Right cardiac atrium (tissue), 5 donors: ENCODE measurements at regions of chr2 and their contacts with region 1.

Region 1: DNA sequence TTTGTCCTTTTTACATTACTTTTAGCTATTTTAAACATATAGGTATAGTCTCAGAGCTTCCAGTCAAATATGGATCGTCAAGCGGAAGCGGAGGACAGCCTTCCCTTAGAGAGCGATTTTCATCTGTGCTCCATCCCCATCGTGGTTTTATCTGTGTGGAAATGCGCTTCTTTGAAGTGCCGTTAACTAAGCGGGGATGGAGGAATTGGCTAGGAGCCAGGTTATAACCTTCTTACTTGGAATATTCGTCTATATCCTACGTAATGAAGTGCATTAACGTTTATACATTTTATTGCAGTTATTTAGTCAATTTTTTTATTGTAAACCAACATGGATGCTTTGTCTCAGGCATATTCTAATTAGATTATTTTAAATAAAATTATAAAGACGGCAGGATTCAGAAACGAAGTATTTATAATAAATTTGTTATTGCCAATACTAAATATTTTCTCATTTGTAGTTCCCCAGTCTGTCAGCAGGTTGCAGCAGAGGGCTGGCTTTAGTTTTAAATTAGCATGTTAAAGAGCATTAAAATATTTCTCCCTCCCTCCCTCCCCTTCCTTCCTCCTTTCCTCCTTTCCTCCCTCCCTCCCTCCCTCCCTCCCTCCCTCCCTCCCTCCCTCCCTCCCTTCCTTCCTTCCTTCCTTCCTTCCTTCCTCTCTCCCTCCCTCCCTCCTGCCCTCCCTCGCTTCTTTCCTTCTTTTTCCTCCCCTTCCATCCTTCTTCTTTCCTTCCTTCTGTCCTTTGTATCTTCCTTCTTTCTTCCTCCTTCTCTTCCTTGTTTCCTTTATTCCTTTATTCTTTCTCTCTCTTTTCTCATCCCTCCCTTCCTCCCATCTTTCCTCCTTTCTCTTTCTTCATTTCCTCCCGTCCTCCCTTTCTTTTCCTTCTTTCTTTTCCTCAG is 80.6 kb upstream of the DOCK10 start:
- DNase-seq: no peak
- ATAC-seq: no peak
- H3K4me3 ChIP-seq: no peak overlapping the region
- H3K27ac ChIP-seq: no peak overlapping the region
- H3K4me1 ChIP-seq: no peaks in the 10 kb centered on the region
- H3K27me3 ChIP-seq: no peaks in the 10 kb centered on the region

Region 2: GRCh38 chr2:223860809-223861738 is 1261.8 kb before region 1 on chr2:
- intact Hi-C with region 1: no loop called
- DNase-seq: no peak
- ATAC-seq: peak in 1 of 2 donors; percentile 54
- H3K4me3 ChIP-seq: no peak overlapping the region
- H3K27ac ChIP-seq: no peak overlapping the region
- H3K4me1 ChIP-seq: no peaks in the 10 kb centered on the region
- H3K27me3 ChIP-seq: no peaks in the 10 kb centered on the region

Region 3: DNA sequence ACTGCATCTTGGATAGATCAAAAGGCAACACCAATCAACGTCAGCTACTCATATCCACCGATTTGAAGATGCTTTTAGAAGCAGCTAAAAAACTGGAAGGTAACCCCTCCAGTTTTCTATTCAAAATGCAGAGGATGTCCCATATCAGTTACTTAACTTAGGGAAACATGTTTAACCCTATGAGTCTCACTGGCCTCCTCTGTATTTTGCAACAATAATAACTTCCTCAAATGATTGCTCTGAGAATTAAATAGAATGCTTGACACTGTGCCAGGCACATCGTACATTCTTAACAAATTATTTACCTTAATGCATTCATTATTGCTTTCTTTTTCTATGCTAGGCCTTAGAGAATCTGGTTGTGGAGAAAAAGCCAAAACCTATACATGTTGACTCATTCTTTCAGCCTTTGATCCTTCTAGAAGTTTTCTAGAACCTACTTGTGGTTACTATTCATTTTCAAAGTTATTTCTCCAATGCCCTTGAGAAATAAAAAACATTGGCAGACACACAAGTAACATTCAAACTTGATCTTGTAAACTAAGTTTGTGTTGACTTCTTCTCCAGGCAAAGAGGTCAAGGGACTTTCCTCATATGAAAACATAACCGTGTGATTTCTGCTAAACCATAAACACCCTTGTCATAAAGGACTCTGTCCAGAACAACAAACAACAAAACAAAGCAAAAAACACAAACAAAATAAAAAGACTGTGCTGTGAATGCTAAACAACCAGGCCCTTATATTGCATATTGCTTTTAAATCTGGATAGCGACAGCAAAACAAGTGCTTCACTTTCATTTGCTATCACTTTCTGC is 85.2 kb before region 1 on chr2:
- intact Hi-C with region 1: no loop called
- DNase-seq: no peak
- ATAC-seq: no peak
- H3K4me3 ChIP-seq: no peak overlapping the region
- H3K27ac ChIP-seq: no peak overlapping the region
- H3K4me1 ChIP-seq: no peaks in the 10 kb centered on the region
- H3K27me3 ChIP-seq: no peaks in the 10 kb centered on the region

Region 4: GRCh38 chr2:225660262-225661131 is 537.7 kb after region 1 on chr2:
- intact Hi-C with region 1: loop called in 1 of 4 experiments (anchors 5 kb)
- DNase-seq: peak; percentile 64 to 91 (median 82)
- ATAC-seq: peak; percentile 56 to 59
- H3K4me3 ChIP-seq: no peak overlapping the region
- H3K27ac ChIP-seq: no peak overlapping the region
- H3K4me1 ChIP-seq: no peaks in the 10 kb centered on the region
- H3K27me3 ChIP-seq: no peaks in the 10 kb centered on the region

Region 5: DNA sequence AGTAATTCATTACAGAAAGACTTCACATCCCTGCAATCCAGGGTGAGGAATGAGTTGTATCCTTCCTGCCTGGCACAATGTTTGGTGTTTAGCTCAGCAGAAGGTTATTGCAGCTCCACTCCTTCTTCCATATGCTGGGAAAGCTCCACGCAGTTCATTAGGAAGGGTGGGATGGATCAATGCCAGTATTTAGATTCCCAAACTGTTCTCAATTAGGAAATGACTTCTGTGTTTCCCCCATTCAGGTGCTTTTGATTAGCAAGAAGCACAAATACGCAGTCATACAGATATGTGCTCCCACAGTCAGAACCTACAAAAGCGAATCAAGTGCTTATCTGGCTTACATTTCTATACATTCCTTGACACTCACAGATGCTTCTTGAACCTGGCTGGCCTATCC is 617.3 kb after region 1 on chr2:
- intact Hi-C with region 1: no loop called
- DNase-seq: no peak
- ATAC-seq: no peak
- H3K4me3 ChIP-seq: no peak overlapping the region
- H3K27ac ChIP-seq: no peak overlapping the region
- H3K4me1 ChIP-seq: no peaks in the 10 kb centered on the region
- H3K27me3 ChIP-seq: no peaks in the 10 kb centered on the region